AG04450 (cell line): ENCODE measurements at regions of chr18 and their contacts with region 1.

Region 1: GRCh38 chr18:7789856-7790552 is 222.9 kb downstream of the PTPRM start:
- DNase-seq: peak; percentile 26
- H3K4me3 ChIP-seq: no peak overlapping the region
- H3K27ac ChIP-seq: no peak overlapping the region
- H3K27me3 ChIP-seq: no peaks in the 10 kb centered on the region
- CTCF ChIP-seq: peak; percentile 62

Region 2: DNA sequence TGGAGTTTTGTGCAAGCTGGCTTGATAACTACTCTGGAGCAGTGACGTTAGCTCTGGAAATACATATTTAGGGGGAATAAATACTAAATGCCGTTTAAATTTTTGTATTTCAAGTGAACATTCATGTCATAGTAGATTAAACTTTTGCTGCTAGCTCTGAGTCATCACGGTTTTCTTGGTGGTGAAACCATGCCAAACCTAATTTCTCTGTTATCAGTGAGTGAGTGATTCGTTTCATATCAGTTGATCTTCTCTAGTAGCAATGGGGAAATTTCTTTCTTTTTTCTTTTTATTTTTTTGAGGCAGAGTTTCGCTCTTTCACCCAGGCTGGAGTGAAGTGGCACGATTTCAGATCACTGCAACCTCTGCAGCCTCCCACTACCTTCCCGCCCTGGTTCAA is 11.8 kb before region 1 on chr18:
- CTCF ChIA-PET with region 1: interaction called, 32 read pairs
- POLR2A ChIA-PET with region 1: no interaction called
- DNase-seq: no peak
- H3K4me3 ChIP-seq: no peak overlapping the region
- H3K27ac ChIP-seq: no peak overlapping the region
- H3K27me3 ChIP-seq: no peaks in the 10 kb centered on the region
- CTCF ChIP-seq: no peak